Activated CD4-positive, alpha-beta T cell treated with anti-CD3 and anti-CD28 coated beads, Interleukin-2, amount 10 ng/mL, durations not matched to agents 24 days and 14 days (primary cell): ENCODE measurements at regions of chr2 and their contacts with region 1.

Region 1: DNA sequence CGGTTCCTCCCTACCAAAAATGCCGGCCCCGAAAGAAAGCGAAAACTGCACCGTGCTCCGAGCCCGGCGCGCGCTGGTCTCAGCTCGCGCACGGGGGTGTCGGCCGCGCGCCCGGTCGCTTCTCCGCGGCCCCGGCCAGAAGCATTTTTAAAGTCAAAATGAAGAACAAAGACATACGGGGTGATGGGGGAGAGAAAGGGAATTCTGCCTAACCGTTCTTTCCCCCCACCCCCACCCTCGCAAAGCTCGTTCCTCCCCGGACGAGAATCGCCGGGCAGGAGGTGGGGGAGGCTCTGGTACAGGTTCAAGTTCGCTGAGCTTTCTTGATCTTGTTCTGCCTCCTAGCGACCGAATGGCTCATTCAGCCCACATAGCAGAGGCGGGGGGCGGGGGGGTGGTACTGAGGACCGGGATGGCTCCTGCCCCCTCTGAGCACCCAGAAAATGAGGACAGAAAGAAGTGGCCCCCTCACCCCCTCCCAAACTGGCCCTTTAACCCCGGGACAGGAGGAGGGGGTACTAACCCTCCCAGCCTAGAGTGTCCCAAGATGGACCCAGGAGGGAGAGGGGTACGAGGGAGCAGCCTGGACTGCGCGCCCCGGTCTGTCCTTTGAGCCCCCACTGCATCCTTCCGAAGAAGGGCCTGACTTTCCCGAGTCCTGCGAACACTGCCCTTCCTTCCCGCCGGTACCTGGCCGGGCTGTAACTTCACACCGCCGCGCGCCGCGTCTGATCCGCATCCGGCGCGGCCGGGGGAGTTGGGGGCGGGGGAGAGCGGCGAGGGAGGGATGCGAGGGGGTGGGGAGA is 3.1 kb downstream of the BCL11A start:
- DNase-seq: peak; percentile 78
- H3K4me3 Mint-ChIP-seq: peak overlapping the region; percentile 86
- H3K27ac Mint-ChIP-seq: peak overlapping the region; percentile 37
- H3K4me1 Mint-ChIP-seq: peaks cover 21% of the 10 kb centered on the region
- H3K27me3 Mint-ChIP-seq: peaks cover 71% of the 10 kb centered on the region

Region 2: DNA sequence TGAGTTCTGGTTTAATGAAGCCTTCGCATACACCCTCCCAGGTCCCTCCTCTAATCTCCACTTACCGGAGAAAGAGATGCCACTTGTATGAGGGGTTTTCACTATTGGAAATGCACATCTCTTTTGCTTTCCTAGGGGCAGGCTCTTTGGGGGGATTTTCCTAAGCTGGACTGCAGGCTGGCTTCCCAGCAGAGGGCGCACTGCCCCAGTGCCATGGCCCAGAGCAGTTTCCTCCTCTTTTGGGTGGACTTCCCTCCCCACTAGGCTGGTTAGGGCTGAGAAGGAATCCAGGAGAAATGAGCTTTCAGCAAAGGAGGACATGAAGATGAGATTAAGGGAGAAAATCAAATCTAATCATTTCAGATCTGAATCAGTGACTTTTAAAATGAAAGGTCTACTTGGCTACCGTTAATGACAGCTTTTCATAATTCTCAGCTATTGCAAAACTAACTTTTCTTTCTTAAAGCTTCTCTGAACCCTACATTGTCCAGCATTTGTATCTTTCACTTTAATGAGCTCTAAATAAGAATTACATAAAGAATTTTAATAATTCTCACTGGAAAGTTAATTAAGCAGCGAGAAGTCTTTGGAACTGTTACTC is 1525.1 kb before region 1 on chr2:
- intact Hi-C with region 1: loop called (anchors 5 kb)
- DNase-seq: peak; percentile 63
- H3K4me3 Mint-ChIP-seq: no peak overlapping the region
- H3K27ac Mint-ChIP-seq: no peak overlapping the region
- H3K4me1 Mint-ChIP-seq: no peaks in the 10 kb centered on the region
- H3K27me3 Mint-ChIP-seq: no peaks in the 10 kb centered on the region

Region 3: GRCh38 chr2:59301466-59302402 is 1248.6 kb before region 1 on chr2:
- intact Hi-C with region 1: loop called (anchors 2 kb)
- DNase-seq: peak; percentile 63
- H3K4me3 Mint-ChIP-seq: no peak overlapping the region
- H3K27ac Mint-ChIP-seq: no peak overlapping the region
- H3K4me1 Mint-ChIP-seq: no peaks in the 10 kb centered on the region
- H3K27me3 Mint-ChIP-seq: no peaks in the 10 kb centered on the region

Region 4: DNA sequence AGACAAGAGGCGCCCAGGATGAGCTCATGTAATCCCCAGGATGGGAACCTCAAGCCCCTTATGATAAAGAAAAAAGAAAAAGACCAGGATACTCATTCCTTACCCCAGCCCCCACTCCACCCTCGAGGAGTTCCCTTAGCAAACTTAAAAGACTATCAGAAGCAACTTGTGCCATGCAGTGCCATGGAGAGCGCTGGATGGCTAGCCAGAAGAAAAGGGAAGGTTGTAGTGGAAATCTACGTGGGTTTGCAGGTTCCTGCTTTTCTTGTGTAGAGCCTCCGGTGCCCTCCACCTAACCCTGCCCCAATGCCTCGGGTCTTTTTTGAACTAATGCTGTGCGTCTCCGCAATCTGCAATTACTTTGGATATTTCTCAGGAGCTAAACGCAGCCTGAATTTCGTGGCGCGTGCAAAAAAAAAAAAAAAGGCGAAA is 19.3 kb after region 1 on chr2:
- intact Hi-C with region 1: loop called (anchors 2 kb)
- DNase-seq: peak; percentile 54
- H3K4me3 Mint-ChIP-seq: no peak overlapping the region
- H3K27ac Mint-ChIP-seq: no peak overlapping the region
- H3K4me1 Mint-ChIP-seq: peaks cover 2% of the 10 kb centered on the region
- H3K27me3 Mint-ChIP-seq: peaks cover 40% of the 10 kb centered on the region

Region 5: DNA sequence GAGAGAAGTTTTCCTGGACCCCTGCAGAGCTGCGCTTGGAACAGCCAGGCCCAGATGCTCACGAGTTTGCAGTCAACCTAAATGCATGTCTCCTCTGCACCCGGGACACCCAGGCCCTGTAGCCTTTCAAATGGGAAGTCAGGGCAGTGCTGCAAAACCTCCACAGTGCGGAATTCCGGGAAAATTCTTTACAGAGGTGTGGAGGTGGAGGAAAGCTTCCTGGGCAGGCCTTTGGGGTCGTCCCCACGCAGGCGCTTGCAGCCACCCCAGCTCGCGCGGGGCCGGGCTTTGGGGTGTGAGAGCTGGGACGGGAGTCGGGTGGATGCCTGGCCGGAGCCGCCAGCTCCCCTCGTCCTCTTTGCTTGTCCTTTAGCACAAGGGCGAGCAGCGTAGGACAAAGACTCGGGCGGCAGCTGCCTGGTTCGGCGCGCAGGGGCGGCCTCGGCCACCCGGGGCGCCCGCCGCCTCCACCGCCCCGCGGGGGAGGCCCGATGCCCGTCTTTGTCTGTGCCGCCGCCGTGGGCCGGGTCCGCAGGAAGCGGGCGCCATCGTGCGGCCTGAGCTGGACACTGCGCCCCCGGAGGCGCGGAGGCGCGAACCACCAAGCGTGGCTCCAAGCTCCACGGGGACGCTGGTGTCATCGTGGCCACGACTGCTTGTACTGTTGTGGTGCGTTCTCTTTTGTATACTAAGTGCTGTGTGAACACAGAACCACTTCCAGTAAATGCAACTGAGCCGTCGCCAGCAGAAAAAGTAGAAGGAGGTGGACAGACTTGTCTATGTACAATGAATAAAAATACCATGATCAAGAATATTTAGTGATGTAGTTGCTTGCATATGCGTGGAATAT is 31.3 kb after region 1 on chr2:
- intact Hi-C with region 1: no loop called
- DNase-seq: peak; percentile 91
- H3K4me3 Mint-ChIP-seq: no peak overlapping the region
- H3K27ac Mint-ChIP-seq: no peak overlapping the region
- H3K4me1 Mint-ChIP-seq: peaks cover 3% of the 10 kb centered on the region
- H3K27me3 Mint-ChIP-seq: peaks cover 38% of the 10 kb centered on the region

Region 6: GRCh38 chr2:60597346-60597745 is 47.0 kb after region 1 on chr2:
- intact Hi-C with region 1: no loop called
- DNase-seq: no peak
- H3K4me3 Mint-ChIP-seq: no peak overlapping the region
- H3K27ac Mint-ChIP-seq: no peak overlapping the region
- H3K4me1 Mint-ChIP-seq: no peaks in the 10 kb centered on the region
- H3K27me3 Mint-ChIP-seq: peaks cover 12% of the 10 kb centered on the region

Region 7: GRCh38 chr2:61055557-61055956 is 505.2 kb after region 1 on chr2:
- intact Hi-C with region 1: no loop called
- DNase-seq: no peak
- H3K4me3 Mint-ChIP-seq: no peak overlapping the region
- H3K27ac Mint-ChIP-seq: peak overlapping the region; percentile 4
- H3K4me1 Mint-ChIP-seq: no peaks in the 10 kb centered on the region
- H3K27me3 Mint-ChIP-seq: no peaks in the 10 kb centered on the region